Heart left ventricle (tissue), 16 donors: ENCODE measurements at regions of chr1 and their contacts with region 1.

Region 1: GRCh38 chr1:13965770-13966398 is 265.9 kb downstream of the PRDM2 start:
- DNase-seq: peak in 4 of 5 donors; percentile 29 to 62 (median 43)
- ATAC-seq: peak in 3 of 4 donors; percentile 74 to 88 (median 77)
- H3K4me3 ChIP-seq: no peak overlapping the region
- H3K27ac ChIP-seq: no peak overlapping the region
- H3K4me1 ChIP-seq: no peaks in the 10 kb centered on the region
- H3K27me3 ChIP-seq: peaks cover 0 to 37% (median 4%) of the 10 kb centered on the region in 9 donors
- CTCF ChIP-seq: peak in 11 of 12 donors; percentile 6 to 52 (median 42)
- POLR2A ChIP-seq: no peak

Region 2: DNA sequence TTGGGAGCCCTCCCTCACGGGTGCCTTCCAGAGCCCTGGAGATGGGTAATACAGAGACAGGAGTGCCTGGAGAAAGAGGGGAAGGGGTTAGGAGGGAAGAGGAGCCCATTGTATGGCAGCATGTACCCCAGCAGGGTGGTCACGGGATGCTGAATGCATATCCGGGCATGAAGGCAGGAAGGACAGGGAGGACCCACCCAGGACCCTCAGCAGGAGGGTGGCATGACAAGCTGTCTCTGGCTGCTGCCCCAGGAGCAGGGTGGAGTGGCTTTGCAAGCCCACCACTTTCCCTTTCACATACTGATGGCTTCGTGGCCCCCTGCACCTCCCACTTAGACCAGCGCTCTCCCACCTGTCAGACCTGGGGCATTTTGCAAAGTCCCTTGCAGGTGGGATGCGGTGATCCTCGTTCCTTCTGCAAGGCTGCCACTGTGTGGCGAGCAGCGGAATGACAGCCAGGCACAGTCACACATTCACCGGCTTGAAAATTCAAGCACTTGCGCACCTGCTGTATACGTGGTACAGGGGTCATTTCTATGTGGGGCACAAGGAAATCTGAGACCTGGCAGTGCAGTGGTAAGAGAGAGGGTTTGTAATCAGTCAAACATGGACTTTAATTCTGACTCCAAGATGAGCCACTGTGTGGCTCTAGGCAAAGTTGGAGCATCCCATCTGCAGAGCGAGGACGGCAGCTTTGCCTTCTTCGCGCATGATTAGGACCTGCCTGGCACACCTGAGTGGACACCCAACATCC is 1134.4 kb after region 1 on chr1:
- intact Hi-C with region 1: loop called in 2 of 10 experiments (anchors 5 kb)
- DNase-seq: peak in 1 of 5 donors; percentile 42
- ATAC-seq: peak in 3 of 4 donors; percentile 52 to 70 (median 54)
- H3K4me3 ChIP-seq: no peak overlapping the region
- H3K27ac ChIP-seq: no peak overlapping the region
- H3K4me1 ChIP-seq: no peaks in the 10 kb centered on the region
- H3K27me3 ChIP-seq: peaks cover 0 to 36% (median 9%) of the 10 kb centered on the region in 9 donors
- CTCF ChIP-seq: peak; percentile 75 to 88 (median 83)
- POLR2A ChIP-seq: no peak